Activated CD4-positive, alpha-beta memory T cell treated with anti-CD3 and anti-CD28 coated beads, Interleukin-2, amount 10 ng/mL, durations not matched to agents 7 days and 5 days (primary cell): ENCODE measurements at regions of chr7 and their contacts with region 1.

Region 1: DNA sequence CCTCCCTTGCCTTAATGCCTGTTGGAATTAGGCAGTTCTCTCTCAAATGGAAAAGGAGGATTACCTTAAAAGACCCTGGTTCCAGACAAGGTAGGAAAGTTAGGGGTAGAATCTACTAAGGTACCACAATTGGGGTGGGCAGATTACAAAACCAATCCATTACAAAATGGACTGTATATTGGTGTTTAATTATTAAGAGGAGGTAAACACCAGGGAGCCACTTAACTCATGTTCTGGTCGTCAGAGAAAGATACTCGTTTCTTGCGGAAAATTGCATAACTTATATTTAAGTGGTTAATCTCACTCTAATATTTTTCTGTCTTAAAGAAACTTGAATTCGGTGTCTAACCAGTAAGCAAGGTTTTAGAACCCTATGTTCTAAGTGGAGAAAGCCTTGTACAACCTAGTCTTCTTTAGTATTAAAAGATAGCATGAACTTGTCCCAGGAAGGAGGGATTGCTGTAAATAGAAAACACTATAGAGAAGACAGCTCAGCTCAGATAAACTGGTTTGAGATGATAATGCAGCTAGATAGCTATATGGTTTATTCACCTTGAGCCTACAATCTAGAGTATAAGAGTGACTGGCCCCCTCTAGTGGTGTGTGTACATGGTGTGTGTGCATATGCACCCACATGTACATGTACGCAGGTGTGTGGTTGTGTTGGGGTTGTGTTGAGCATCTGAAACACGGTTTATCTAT is 58.0 kb upstream of the STRIP2 start:
- DNase-seq: peak; percentile 60
- H3K4me3 Mint-ChIP-seq: no peak overlapping the region
- H3K27ac Mint-ChIP-seq: peak overlapping the region; percentile 69
- H3K4me1 Mint-ChIP-seq: peaks cover 56% of the 10 kb centered on the region
- H3K27me3 Mint-ChIP-seq: no peaks in the 10 kb centered on the region

Region 2: DNA sequence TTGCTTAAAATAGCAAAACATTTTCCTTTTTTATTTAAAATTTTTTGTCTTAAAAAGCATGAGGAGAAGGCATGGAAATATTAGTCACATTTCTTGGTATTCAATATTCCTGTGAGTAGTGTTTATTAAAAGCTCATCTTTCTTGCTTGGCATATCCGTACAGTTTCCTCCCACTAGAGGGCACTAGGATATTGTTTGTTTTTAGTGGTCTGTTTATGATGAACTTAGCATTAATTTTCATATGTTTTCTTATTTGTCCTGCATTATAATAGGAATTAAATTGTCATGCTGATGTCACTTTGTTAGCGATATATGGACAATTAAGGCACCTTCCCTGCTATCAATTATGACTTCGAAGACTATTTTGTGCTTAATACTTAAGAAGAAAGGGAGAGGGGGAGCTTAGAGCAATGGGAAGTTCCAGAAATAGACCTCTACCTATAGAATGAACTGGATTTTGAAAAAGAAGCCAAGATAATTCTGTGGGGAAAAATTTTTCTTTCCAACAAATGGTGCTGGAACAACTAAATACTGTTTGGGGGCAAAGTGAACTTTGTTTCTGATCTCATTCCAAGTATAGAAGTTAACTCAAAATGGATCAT is 33.0 kb before region 1 on chr7:
- CTCF ChIA-PET with region 1: interaction called, 29 read pairs
- POLR2A ChIA-PET with region 1: interaction called, 5 read pairs
- DNase-seq: no peak
- H3K4me3 Mint-ChIP-seq: no peak overlapping the region
- H3K27ac Mint-ChIP-seq: no peak overlapping the region
- H3K4me1 Mint-ChIP-seq: peaks cover 41% of the 10 kb centered on the region
- H3K27me3 Mint-ChIP-seq: peaks cover 4% of the 10 kb centered on the region

Region 3: GRCh38 chr7:129359638-129360037 is 16.6 kb before region 1 on chr7:
- CTCF ChIA-PET with region 1: interaction called, 32 read pairs
- POLR2A ChIA-PET with region 1: no interaction called
- DNase-seq: no peak
- H3K4me3 Mint-ChIP-seq: no peak overlapping the region
- H3K27ac Mint-ChIP-seq: no peak overlapping the region
- H3K4me1 Mint-ChIP-seq: peaks cover 5% of the 10 kb centered on the region
- H3K27me3 Mint-ChIP-seq: no peaks in the 10 kb centered on the region

Region 4: GRCh38 chr7:129389829-129390228 is 13.6 kb after region 1 on chr7:
- CTCF ChIA-PET with region 1: interaction called, 48 read pairs
- POLR2A ChIA-PET with region 1: interaction called, 7 read pairs
- DNase-seq: no peak
- H3K4me3 Mint-ChIP-seq: no peak overlapping the region
- H3K27ac Mint-ChIP-seq: no peak overlapping the region
- H3K4me1 Mint-ChIP-seq: peaks cover 26% of the 10 kb centered on the region
- H3K27me3 Mint-ChIP-seq: no peaks in the 10 kb centered on the region

Region 5: GRCh38 chr7:129433847-129434674 is 57.8 kb after region 1 on chr7 and contains the start of gene STRIP2:
- CTCF ChIA-PET with region 1: interaction called, 11 read pairs
- POLR2A ChIA-PET with region 1: interaction called, 10 read pairs
- DNase-seq: peak; percentile 94
- H3K4me3 Mint-ChIP-seq: peak within 1 kb of the TSS; percentile 85
- H3K27ac Mint-ChIP-seq: peak within 1 kb of the TSS; percentile 71
- H3K4me1 Mint-ChIP-seq: peaks cover 38% of the 10 kb centered on the region
- H3K27me3 Mint-ChIP-seq: peaks cover 6% of the 10 kb centered on the region
- total RNA-seq, gene STRIP2: 28.3 to 29.7 TPM